Transverse colon (tissue), 4 donors: ENCODE measurements at regions of chr5 and their contacts with region 1.

Region 1: GRCh38 chr5:64612344-64612961 is 77.8 kb upstream of the SHISAL2B start:
- DNase-seq: no peak
- H3K4me3 ChIP-seq: no peak overlapping the region
- H3K27ac ChIP-seq: no peak overlapping the region
- H3K4me1 ChIP-seq: no peaks in the 10 kb centered on the region
- H3K27me3 ChIP-seq: no peaks in the 10 kb centered on the region
- CTCF ChIP-seq: peak; percentile 33 to 50 (median 48)
- EP300 ChIP-seq: no peak
- POLR2A ChIP-seq: no peak

Region 2: GRCh38 chr5:64147849-64148441 is 464.5 kb before region 1 on chr5:
- in situ Hi-C with region 1: loop called in 2 of 4 experiments (anchors 25 kb)
- intact Hi-C with region 1: loop called (anchors 5 kb)
- DNase-seq: peak; percentile 20
- H3K4me3 ChIP-seq: no peak overlapping the region
- H3K27ac ChIP-seq: no peak overlapping the region
- H3K4me1 ChIP-seq: peaks cover 0 to 12% (median 0%) of the 10 kb centered on the region in 4 donors
- H3K27me3 ChIP-seq: no peaks in the 10 kb centered on the region
- CTCF ChIP-seq: peak; percentile 43 to 60 (median 55)
- EP300 ChIP-seq: no peak
- POLR2A ChIP-seq: no peak

Region 3: DNA sequence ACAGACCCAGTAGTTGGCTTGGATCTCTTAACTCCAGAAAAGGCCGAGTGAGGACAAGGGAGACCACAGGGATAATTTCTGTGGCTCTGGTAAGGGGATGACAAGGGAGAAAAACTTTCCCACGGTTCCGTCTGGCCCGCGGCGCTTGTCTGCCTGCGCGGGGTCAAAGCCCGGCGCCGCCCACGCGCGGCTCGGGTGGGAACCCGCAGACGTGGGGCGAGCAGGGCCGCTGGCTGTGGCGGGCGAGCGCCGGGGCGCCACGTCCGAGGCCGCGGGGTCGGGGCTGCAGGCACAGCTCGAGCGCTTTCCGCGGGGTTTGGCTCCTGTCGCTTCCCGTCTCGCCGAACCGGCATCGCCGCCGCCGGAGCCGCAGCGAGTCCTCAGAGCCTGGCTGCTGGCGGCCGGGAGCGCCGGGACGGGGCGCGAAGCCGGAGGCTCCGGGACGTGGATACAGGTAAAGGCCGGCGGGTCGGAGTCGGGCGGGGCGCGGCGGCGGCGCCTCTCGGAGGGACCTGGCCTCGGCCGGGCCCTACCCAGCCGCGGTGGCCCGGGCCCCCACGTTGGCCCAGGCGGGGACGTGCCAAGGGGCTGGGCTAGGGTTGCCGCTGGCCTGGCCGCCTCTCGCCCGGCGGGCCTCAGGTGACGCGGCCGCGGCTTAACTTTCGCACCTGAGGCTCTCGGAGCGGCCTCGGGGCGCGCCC is 446.8 kb before region 1 on chr5 and contains the start of gene RNF180:
- in situ Hi-C with region 1: loop called in 1 of 4 experiments (anchors 25 kb)
- intact Hi-C with region 1: no loop called
- DNase-seq: peak; percentile 24
- H3K4me3 ChIP-seq: peak within 1 kb of the TSS; percentile 39 to 67 (median 60)
- H3K27ac ChIP-seq: peak within 1 kb of the TSS; percentile 48 to 71 (median 58)
- H3K4me1 ChIP-seq: peaks cover 0 to 14% (median 6%) of the 10 kb centered on the region in 4 donors
- H3K27me3 ChIP-seq: peaks cover 37% of the 10 kb centered on the region
- CTCF ChIP-seq: no peak
- EP300 ChIP-seq: no peak
- POLR2A ChIP-seq: no peak
- total RNA-seq, gene RNF180: 1.9 to 8.0 (median 3.2) TPM

Region 4: DNA sequence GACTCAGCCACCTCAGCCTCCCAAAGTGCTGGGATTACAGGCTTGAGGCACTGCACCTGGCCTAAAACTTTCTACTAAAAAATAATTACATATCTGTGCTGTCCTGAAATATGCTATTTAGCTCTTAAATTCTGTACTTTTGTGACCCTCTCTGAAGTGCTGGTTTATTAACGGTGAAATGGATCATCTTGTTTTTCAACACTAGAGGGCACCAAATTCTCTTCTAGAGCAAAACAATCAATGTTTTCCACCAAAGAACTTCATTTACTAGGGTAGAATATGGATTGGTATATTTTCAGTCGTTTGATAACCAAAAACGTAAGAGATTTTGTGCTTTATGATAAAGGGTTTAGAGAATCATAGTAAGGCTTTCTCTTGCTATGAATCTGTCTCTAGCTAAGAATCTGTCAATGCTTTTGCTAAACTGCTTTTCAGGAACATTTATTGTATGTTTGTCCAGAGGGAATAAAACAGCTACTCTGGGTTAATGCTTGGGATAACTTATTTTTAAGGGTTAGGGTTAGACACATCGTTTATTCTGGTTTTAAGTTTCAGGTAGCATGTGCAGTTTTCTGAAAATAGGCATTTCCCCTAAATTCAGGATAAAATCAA is 383.2 kb before region 1 on chr5:
- in situ Hi-C with region 1: loop called (anchors 10 to 25 kb)
- intact Hi-C with region 1: no loop called
- DNase-seq: no peak
- H3K4me3 ChIP-seq: no peak overlapping the region
- H3K27ac ChIP-seq: no peak overlapping the region
- H3K4me1 ChIP-seq: no peaks in the 10 kb centered on the region
- H3K27me3 ChIP-seq: no peaks in the 10 kb centered on the region
- CTCF ChIP-seq: peak; percentile 32 to 64 (median 47)
- EP300 ChIP-seq: no peak
- POLR2A ChIP-seq: no peak

Region 5: DNA sequence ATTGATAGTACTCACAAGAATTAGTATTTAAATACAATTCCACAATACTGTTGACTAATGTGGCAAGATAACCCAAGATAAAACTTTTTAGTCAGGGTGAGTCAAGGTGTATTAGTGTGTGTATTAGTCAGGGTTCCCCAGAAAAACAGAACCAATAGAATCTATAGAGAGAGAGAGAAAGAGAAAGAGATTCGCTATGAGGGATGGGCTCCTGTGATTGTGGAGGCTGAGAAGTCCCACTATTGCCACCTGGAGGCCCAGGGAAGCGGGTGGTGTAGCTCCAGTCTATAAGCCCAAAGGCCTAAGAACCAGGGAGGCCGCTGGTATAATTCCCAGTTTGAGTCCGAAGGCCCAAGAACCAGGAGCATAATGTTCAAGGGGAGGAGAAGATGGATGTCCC is 67.8 kb after region 1 on chr5:
- in situ Hi-C with region 1: no loop called
- intact Hi-C with region 1: no loop called
- DNase-seq: no peak
- H3K4me3 ChIP-seq: no peak overlapping the region
- H3K27ac ChIP-seq: no peak overlapping the region
- H3K4me1 ChIP-seq: no peaks in the 10 kb centered on the region
- H3K27me3 ChIP-seq: no peaks in the 10 kb centered on the region
- CTCF ChIP-seq: no peak
- EP300 ChIP-seq: no peak
- POLR2A ChIP-seq: no peak

Region 6: GRCh38 chr5:65059681-65060598 is 447.5 kb after region 1 on chr5:
- in situ Hi-C with region 1: no loop called
- intact Hi-C with region 1: loop called (anchors 10 kb)
- DNase-seq: no peak
- H3K4me3 ChIP-seq: no peak overlapping the region
- H3K27ac ChIP-seq: no peak overlapping the region
- H3K4me1 ChIP-seq: peaks cover 0 to 7% (median 3%) of the 10 kb centered on the region in 4 donors
- H3K27me3 ChIP-seq: no peaks in the 10 kb centered on the region
- CTCF ChIP-seq: no peak
- EP300 ChIP-seq: no peak
- POLR2A ChIP-seq: no peak